OCI-LY7 (cell line): ENCODE measurements at regions of chr9 and their contacts with region 1.

Region 1: DNA sequence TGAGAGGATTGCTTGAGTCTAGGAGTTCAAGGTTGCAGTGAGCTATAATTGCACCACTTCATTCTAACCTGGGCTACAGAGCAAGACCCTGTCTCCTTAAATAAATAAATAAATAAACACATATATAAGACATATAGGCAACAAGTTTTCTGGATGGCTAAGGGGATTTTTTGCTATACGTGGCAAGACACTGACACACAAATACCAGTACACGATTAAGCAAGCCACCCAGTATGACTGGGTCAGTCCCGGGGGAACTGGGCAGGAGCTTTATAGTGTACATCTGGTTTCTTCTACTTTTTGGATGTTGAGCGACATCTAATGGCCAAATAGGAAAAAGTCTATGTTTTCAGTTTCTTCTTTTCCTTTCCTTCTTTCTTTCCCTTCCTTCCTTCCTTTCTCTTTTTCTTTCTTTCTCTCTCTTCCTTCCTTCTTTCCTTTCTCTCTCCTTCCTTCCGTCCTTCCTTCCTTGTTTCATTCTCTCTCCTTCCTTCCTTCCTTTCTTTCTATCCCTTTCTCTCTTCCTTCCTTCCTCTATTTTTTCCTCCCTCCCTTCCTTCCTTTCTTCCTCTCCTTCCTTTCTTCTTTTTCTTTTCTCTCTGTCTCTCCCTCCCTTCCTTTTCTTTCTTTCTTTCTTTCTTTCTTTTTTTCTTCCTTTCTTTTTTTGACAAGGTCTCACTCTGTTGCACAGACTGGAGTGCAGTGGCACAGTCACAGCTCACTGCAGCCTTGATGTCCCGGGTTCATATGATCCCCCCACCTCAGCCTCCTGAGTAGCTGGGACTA is 47.0 kb upstream of the PLIN2 start:
- DNase-seq: peak; percentile 81
- H3K4me3 ChIP-seq: no peak overlapping the region
- H3K27ac ChIP-seq: no peak overlapping the region
- H3K4me1 ChIP-seq: peaks cover 20% of the 10 kb centered on the region
- CTCF ChIP-seq: peak; percentile 86

Region 2: DNA sequence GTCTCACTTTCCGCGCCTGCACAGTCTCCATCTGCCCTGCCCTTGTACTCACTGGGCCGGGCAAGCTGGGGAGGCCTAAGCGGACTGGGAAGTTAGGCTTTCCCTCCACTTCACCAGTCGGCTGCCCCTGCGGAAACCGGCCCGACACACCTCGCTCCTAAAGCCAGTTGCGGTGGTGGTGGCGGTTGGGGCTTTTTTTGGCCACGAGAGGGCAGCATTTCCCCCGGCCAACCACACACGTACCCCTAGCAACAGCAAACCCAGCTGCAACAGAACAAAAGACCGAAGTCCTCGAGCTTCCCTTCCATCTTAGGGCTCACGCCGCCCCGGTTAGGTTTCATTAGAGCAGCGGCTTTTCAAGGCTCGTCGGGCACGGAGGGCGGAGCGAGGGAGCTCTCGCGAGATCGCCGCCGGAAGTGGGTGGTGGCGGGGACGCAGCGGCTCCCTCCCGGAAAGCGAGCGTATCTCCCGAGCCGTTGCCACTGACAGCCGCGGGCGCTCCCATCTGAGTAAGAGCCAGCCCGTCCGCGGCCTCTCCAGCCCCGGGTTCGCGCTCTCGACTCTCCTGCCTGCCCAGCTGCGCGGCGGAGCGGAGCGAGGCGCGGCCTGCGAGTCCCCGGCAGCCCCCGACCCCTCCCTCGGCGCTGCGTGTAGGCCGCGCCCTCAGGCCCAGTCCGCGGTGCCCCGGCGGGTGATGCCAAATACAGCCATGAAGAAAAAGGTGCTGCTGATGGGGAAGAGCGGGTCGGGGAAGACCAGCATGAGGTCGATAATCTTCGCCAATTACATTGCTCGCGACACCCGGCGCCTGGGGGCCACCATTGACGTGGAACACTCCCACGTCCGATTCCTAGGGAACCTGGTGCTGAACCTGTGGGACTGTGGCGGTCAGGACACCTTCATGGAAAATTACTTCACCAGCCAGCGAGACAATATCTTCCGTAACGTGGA is 125.1 kb before region 1 on chr9 and contains the start of gene RRAGA:
- CTCF ChIA-PET with region 1: no interaction called
- POLR2A ChIA-PET with region 1: interaction called, 4 read pairs
- intact Hi-C with region 1: loop called (anchors 1 kb)
- DNase-seq: peak; percentile 97
- H3K4me3 ChIP-seq: peak within 1 kb of the TSS; percentile 78
- H3K27ac ChIP-seq: peak within 1 kb of the TSS; percentile 87
- H3K4me1 ChIP-seq: peaks cover 28% of the 10 kb centered on the region
- CTCF ChIP-seq: peak; percentile 89
- total RNA-seq, gene RRAGA: 16.4 and 25.9 TPM in 2 replicates

Region 3: GRCh38 chr9:19358701-19359100 is 184.4 kb after region 1 on chr9:
- CTCF ChIA-PET with region 1: no interaction called
- POLR2A ChIA-PET with region 1: no interaction called
- intact Hi-C with region 1: no loop called
- DNase-seq: no peak
- H3K4me3 ChIP-seq: no peak overlapping the region
- H3K27ac ChIP-seq: no peak overlapping the region
- H3K4me1 ChIP-seq: no peaks in the 10 kb centered on the region
- CTCF ChIP-seq: no peak

Region 4: GRCh38 chr9:19934301-19934868 is 760.1 kb after region 1 on chr9:
- CTCF ChIA-PET with region 1: no interaction called
- POLR2A ChIA-PET with region 1: no interaction called
- intact Hi-C with region 1: no loop called
- DNase-seq: no peak
- H3K4me3 ChIP-seq: no peak overlapping the region
- H3K27ac ChIP-seq: no peak overlapping the region
- H3K4me1 ChIP-seq: no peaks in the 10 kb centered on the region
- CTCF ChIP-seq: no peak